Left colon (tissue), 2 donors: ENCODE measurements at regions of chr20 and their contacts with region 1.

Region 1: DNA sequence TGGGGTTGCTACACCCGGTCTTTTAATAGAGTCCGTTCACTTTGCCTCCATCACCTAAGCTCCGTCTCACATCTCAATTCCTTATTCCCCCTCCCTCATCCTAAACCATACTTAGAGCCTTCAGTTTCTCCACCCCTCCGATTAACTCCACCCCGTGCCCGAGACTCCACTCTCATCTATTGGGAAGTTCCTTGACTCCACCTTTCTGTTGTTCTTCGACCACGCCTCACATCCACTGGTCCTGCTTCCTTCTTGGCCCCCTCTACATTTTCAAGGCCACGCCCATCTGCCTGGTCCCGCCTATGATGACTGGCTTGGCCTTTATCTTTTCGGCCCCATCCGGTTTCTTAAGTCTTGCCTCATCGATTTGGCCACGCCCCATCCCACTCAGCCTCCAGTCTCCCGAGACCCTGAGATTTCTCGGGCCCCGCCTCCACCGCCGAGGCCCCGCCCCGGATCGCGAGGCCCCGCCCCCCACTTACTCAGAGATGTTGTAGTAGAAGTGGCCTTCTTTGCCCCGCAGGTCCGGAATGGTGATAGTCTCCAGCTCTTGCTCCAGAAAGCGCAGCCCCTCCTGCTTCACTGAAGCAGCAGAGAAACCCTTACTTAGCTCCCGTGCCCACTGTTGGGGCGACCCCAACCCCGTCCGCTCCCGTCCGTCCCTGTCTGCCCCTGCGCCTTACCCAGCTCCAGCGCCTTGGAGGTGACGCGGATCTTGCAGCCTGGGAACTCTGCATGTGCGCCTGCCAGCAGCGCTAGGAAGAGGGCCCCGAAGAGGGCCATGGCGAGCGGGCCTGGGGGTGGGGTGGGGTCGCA is 1.1 kb downstream of the PLTP start:
- DNase-seq: peak; percentile 96 to 98
- ATAC-seq: peak; percentile 84

Region 2: DNA sequence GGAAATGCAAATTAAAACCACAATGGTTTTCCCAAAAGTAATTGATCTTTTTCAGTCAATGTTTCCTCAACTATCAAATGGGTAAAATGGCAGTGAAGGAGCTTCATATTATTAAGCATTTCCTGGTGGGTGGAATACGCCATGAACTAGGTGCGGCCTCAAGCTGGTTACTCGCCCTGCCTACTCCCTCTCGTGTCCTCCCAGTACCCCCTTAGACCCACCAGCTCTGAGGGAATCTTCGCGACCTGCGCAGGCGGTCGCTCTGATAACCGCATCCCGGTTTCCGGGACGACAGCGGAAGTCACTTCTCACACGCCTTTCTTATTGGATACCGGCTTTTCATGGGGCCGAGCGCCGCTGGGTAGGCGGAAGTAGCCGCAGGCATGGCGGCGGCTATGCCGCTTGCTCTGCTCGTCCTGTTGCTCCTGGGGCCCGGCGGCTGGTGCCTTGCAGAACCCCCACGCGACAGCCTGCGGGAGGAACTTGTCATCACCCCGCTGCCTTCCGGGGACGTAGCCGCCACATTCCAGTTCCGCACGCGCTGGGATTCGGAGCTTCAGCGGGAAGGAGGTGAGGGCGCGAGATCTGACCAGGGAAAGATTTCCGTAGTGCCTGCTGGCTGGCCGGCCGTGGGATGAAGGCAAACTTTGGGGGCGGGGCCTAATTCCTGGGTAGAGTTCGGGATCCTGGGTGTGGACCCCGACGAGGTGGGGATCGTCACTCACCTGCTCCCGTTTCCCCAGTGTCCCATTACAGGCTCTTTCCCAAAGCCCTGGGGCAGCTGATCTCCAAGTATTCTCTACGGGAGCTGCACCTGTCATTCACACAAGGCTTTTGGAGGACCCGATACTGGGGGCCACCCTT is 494.9 kb before region 1 on chr20 and contains the start of gene PIGT:
- intact Hi-C with region 1: loop called in 1 of 2 experiments (anchors 10 kb)
- DNase-seq: peak; percentile 89 to 91
- ATAC-seq: peak; percentile 71
- total RNA-seq, gene PIGT: 122 to 152 TPM

Region 3: DNA sequence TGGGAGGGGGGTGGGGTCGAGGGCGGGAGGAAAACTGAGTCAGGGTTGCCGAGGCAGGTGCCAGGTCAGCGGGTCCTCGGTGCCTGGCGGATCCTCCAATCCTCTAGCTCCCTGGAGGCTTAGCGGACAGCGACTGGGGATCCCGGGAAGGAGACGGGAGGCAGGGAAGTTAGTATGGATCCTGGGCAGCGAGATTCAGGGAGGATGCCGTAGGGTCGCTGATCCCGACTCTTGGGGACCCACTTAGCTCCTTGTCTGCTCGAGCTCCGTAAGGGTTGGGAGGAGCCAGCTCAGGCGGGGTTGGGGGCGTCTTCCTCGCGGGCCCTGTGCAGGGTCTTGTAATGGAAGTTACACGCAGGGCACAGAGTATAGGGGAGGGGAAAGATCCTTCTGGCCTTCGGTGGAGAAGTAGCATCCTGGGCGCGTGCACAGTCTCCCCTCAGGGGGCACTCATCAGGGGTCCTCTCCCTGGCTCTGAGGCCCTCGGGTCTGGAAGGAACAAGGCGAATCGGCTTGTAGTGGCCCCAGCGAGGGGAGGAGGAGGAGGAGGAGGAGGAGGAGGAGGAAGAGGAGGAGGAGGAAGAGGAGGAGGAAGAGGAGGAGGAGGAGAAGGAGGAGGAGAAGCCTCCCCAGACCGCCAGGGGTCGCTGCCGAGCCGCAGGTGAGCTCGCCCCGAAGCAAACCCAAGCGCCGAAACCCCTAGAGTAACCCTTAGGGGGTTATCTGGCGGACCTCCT is 111.7 kb after region 1 on chr20:
- intact Hi-C with region 1: no loop called
- DNase-seq: peak in 1 of 2 donors; percentile 74
- ATAC-seq: peak; percentile 66